Breast epithelium (tissue), 4 donors: ENCODE measurements at regions of chr1 and their contacts with region 1.

Region 1: DNA sequence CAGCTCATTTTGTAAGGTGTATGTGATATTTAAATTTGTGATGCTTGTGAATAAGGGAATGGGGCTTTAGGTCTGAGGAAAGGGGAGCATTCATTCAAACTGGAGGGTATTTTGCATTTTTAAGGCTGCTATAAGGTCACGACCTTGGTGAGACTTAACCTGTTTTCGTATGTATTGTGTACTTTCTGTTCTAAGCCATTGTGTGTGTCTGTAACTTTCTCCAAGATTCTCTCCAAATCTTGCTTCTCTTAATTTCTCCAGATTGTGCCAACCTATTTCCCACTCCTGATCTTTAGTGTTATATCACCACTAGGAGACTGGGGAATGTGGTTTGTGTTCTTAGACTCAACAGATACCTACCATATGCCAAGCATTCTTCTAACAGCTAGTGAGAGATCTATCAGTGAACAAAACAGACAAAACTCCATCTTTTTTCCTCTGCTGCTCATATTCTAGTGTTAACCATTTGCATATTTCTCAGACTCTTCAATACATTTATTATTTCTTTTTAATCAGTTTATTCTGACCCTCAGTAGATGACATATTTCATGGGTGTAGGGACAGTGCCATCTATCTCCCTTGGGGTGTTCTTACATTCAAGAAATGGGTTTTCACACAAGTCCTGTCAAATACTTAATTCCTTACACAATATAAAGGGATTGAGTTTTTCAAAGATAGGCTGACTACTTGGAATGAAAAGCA is 27.5 kb downstream of the ATP1B1 start:
- DNase-seq: no peak
- H3K4me3 ChIP-seq: no peak overlapping the region
- H3K27ac ChIP-seq: peak overlapping the region; percentile 10 to 13
- H3K4me1 ChIP-seq: no peaks in the 10 kb centered on the region
- H3K27me3 ChIP-seq: no peaks in the 10 kb centered on the region
- CTCF ChIP-seq: peak in 1 of 3 donors; percentile 25
- POLR2A ChIP-seq: no peak

Region 2: DNA sequence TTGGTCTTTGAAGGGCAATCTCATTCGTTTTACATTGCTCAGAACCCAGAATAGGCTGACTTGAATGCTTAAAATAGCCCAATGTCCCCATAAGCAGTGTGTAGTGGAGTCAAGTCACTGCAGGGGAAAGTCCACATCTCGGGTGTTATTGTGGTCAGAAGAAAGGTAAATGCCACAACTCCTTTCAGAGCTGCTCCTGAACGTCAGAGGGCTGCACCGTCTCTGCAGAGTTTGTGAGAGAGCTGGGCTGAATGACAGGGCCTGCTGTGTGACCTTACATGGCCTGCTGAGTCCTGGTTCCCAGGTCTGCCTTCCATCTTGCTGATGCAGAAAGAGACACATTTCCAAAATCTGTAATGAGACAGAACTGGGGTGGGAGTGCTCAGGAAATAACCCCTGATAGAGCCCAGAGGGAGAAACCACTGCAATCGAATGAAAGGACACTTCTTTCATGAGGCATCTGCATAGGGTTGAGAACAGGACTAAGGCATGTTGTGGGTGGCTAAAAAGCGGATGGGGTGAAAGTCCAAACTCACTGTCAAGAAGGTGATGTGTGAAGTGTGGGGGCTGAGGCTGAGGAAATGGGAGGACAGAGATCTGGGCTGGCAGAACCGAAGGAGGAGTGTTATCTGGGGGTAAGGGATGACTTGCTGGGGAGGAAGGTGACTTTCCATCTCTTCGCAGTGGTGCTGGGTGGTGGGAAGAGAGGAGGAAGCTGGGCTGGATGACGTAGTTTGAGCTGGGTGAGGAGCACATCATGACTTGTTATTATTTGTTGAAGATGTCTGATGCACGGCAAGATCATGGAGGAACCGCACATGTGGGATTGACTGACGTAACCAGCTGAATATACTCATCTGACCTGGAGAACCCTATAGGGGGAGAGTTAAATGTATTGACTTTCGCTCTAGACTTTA is 623.8 kb before region 1 on chr1:
- intact Hi-C with region 1: loop called (anchors 5 kb)
- DNase-seq: no peak
- H3K4me3 ChIP-seq: no peak overlapping the region
- H3K27ac ChIP-seq: peak overlapping the region in 1 of 2 donors; percentile 16
- H3K4me1 ChIP-seq: no peaks in the 10 kb centered on the region
- H3K27me3 ChIP-seq: no peaks in the 10 kb centered on the region
- CTCF ChIP-seq: no peak
- POLR2A ChIP-seq: no peak